Testis (tissue), 5 donors: ENCODE measurements at regions of chr13 and their contacts with region 1.

Region 1: DNA sequence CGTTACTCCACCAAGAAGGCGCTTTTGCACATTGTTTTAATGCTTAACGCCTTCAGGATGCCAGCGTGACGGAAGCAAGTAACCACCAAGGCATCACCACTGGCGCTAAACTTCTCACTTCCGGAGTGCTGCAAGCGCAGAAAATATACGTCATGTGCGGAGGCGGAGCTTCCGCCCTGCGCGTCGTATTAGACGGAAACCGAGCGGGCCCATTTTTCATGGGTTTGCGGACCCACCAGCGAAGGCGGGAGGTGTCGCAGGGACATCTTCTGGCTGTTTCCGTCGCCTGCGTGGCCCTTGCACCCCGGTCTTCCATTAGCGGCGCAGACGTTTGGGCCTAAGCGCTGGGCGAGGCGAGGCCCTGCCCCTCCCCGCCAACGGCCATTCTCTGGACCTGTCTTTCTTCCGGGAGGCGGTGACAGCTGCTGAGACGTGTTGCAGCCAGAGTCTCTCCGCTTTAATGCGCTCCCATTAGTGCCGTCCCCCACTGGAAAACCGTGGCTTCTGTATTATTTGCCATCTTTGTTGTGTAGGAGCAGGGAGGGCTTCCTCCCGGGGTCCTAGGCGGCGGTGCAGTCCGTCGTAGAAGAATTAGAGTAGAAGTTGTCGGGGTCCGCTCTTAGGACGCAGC is at the start of gene ERCC5:
- DNase-seq: peak; percentile 93
- H3K4me3 ChIP-seq: peak within 1 kb of the TSS; percentile 80 to 92
- H3K27ac ChIP-seq: peak within 1 kb of the TSS; percentile 80 to 97
- H3K4me1 ChIP-seq: peaks cover 3% of the 10 kb centered on the region
- H3K27me3 ChIP-seq: no peaks in the 10 kb centered on the region
- CTCF ChIP-seq: peak in 1 of 3 experiments; percentile 17
- POLR2A ChIP-seq: no peak
- total RNA-seq, gene ERCC5: 49.9 to 54.9 TPM

Region 2: GRCh38 chr13:102596147-102597028 is 249.4 kb before region 1 on chr13 and contains the start of gene TPP2:
- intact Hi-C with region 1: loop called (anchors 2 kb)
- DNase-seq: peak; percentile 99
- H3K4me3 ChIP-seq: peak within 1 kb of the TSS; percentile 93 to 98
- H3K27ac ChIP-seq: peak within 1 kb of the TSS; percentile 99
- H3K4me1 ChIP-seq: peaks cover 17% of the 10 kb centered on the region
- H3K27me3 ChIP-seq: no peaks in the 10 kb centered on the region
- CTCF ChIP-seq: no peak
- POLR2A ChIP-seq: peak; percentile 49
- total RNA-seq, gene TPP2: 86.2 to 112 TPM

Region 3: DNA sequence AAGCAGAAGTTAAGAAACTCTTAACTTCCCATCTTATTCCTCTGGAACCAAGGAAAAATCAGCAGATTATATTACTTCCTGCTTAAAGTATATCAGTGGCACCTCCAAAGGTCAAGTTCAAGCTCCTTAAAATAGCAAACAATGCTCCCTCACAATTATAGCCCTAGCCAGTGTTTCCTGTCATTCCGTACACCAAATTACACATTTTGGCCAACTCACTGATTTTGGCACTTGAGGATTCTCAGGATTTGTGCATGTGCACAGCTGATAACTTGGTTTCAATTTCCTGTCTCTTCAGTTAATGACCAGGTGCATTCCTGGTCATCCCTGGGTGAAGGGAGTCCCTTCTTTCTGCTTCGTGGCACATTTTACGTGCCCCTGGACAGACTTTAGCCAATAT is 207.0 kb before region 1 on chr13:
- intact Hi-C with region 1: no loop called
- DNase-seq: no peak
- H3K4me3 ChIP-seq: no peak overlapping the region
- H3K27ac ChIP-seq: no peak overlapping the region
- H3K4me1 ChIP-seq: no peaks in the 10 kb centered on the region
- H3K27me3 ChIP-seq: no peaks in the 10 kb centered on the region
- CTCF ChIP-seq: no peak
- POLR2A ChIP-seq: no peak